Natural killer cell (primary cell): ENCODE measurements at regions of chr3 and their contacts with region 1.

Region 1: GRCh38 chr3:14651440-14652251 is at the start of gene CCDC174:
- DNase-seq: peak; percentile 95 to 100
- ATAC-seq: peak; percentile 96 to 100 (median 96)
- H3K4me3 ChIP-seq: peak within 1 kb of the TSS; percentile 84
- H3K4me3 Mint-ChIP-seq: peak within 1 kb of the TSS; percentile 98
- H3K27ac ChIP-seq: peak within 1 kb of the TSS; percentile 96
- H3K27ac Mint-ChIP-seq: peak within 1 kb of the TSS; percentile 96 to 100
- H3K4me1 ChIP-seq: peaks cover 19% of the 10 kb centered on the region
- H3K4me1 Mint-ChIP-seq: peaks cover 38 to 41% of the 10 kb centered on the region in 2 donors
- H3K27me3 ChIP-seq: no peaks in the 10 kb centered on the region
- H3K27me3 Mint-ChIP-seq: no peaks in the 10 kb centered on the region
- CTCF ChIP-seq: no peak
- total RNA-seq, gene CCDC174: 29.7 to 41.2 (median 31.9) TPM

Region 2: DNA sequence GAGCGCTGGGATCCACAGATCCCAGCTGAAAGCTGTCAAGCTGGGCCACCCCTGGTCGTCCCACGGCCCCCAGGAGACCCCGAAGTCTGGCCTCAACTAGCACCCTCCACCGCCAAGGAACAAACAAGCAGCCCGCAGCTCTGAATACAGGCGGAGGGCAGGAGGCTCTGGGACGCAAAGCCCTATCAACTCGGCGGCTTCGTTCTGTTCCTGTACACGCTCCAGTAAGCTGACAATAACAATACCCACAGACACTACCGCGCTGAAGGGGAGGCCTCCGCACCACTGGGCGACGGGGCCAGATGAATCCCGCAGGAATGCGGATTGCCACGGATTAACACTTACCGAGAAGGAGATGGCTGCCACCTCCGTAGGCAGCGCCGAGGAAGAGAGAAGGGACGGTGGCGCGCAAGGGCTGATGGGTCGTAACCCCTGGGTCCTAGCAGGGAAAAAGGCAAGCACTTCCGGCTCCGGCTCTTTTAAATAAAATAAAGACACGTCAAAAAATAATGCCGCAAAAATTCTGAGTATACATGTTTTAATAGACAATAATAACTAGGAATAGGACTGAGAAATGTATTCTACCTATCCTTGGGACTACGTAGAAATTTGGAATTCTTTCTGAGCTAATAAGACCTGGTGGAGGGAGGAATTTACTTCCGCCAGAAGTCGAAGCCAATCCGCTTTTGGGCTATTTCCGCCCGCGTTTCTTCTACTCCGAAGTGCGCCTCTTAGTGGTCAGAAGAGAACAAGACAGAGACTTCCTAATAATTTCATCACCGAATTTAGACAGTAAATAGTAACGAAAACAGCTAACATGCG is 1810.3 kb before region 1 on chr3 and contains the start of gene RPL32:
- intact Hi-C with region 1: loop called (anchors 10 kb)
- DNase-seq: peak; percentile 80 to 97
- ATAC-seq: peak; percentile 93 to 96 (median 93)
- H3K4me3 ChIP-seq: peak within 1 kb of the TSS; percentile 89
- H3K4me3 Mint-ChIP-seq: peak within 1 kb of the TSS; percentile 94
- H3K27ac ChIP-seq: peak within 1 kb of the TSS; percentile 94
- H3K27ac Mint-ChIP-seq: peak within 1 kb of the TSS; percentile 97 to 99
- H3K4me1 ChIP-seq: peaks cover 27% of the 10 kb centered on the region
- H3K4me1 Mint-ChIP-seq: peaks cover 49 to 53% of the 10 kb centered on the region in 2 donors
- H3K27me3 ChIP-seq: no peaks in the 10 kb centered on the region
- H3K27me3 Mint-ChIP-seq: no peaks in the 10 kb centered on the region
- CTCF ChIP-seq: peak; percentile 79
- total RNA-seq, gene RPL32: 1,034 to 1,328 (median 1,277) TPM

Region 3: GRCh38 chr3:13972679-13973379 is 678.8 kb before region 1 on chr3:
- intact Hi-C with region 1: no loop called
- DNase-seq: no peak
- ATAC-seq: no peak
- H3K4me3 ChIP-seq: no peak overlapping the region
- H3K4me3 Mint-ChIP-seq: no peak overlapping the region
- H3K27ac ChIP-seq: no peak overlapping the region
- H3K27ac Mint-ChIP-seq: no peak overlapping the region
- H3K4me1 ChIP-seq: no peaks in the 10 kb centered on the region
- H3K4me1 Mint-ChIP-seq: no peaks in the 10 kb centered on the region
- H3K27me3 ChIP-seq: no peaks in the 10 kb centered on the region
- H3K27me3 Mint-ChIP-seq: peaks cover 5 to 9% of the 10 kb centered on the region in 2 donors
- CTCF ChIP-seq: no peak

Region 4: DNA sequence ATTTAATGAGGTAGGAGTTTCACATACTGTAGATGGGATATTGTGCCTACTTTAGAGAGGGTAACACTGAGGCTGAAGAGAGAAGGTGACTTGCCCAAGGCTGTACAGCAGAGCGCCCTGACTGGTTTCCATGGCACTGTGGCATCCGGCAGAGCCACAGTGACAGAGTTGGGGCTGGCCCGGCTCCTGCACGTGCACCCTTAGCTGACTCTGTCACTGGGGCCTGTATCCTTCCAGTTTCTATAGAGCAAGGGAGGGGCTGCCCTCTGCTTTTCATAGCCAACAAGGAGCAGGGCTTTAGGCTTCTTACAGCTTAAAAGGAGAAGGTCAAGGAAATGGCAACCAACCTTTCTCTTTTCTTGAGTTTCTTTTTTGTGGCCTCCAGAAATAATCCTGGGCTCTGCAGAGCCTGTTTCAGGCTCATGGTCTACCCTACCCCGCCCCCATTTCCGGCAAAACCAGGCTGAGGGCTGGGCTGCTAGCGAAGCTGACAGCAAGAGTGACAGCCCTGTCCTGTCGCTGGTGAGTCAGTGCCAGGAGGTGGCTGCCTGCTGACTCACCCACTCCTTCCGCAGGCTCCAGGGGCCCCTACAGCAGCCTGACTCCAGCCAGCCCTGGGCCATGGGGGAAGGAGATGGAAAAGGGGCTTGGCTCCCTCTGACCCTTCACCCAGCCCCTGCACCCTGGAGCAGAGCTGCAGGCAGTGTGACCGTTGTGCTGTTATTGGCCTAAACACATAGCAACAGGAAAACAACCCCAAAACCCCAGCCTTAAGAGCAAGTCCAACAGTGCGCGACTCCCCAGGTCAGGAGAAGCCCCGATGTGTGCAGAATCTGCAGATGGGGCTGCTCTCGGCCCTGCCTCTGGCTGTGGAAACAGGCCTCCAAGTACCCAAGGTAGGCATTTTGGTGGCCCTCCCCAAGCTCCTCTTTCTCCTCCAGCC is 219.5 kb before region 1 on chr3:
- intact Hi-C with region 1: loop called (anchors 1 kb)
- DNase-seq: peak; percentile 91 to 96
- ATAC-seq: peak; percentile 75 to 93 (median 85)
- H3K4me3 ChIP-seq: peak overlapping the region; percentile 15
- H3K4me3 Mint-ChIP-seq: peak overlapping the region; percentile 73
- H3K27ac ChIP-seq: peak overlapping the region; percentile 97
- H3K27ac Mint-ChIP-seq: peak overlapping the region; percentile 96 to 97
- H3K4me1 ChIP-seq: peaks cover 96% of the 10 kb centered on the region
- H3K4me1 Mint-ChIP-seq: peaks cover 76 to 85% of the 10 kb centered on the region in 2 donors
- H3K27me3 ChIP-seq: no peaks in the 10 kb centered on the region
- H3K27me3 Mint-ChIP-seq: no peaks in the 10 kb centered on the region
- CTCF ChIP-seq: no peak

Region 5: GRCh38 chr3:14480207-14481025 is 171.2 kb before region 1 on chr3:
- intact Hi-C with region 1: no loop called
- DNase-seq: no peak
- ATAC-seq: no peak
- H3K4me3 ChIP-seq: no peak overlapping the region
- H3K4me3 Mint-ChIP-seq: no peak overlapping the region
- H3K27ac ChIP-seq: no peak overlapping the region
- H3K27ac Mint-ChIP-seq: no peak overlapping the region
- H3K4me1 ChIP-seq: no peaks in the 10 kb centered on the region
- H3K4me1 Mint-ChIP-seq: no peaks in the 10 kb centered on the region
- H3K27me3 ChIP-seq: no peaks in the 10 kb centered on the region
- H3K27me3 Mint-ChIP-seq: no peaks in the 10 kb centered on the region
- CTCF ChIP-seq: no peak

Region 6: DNA sequence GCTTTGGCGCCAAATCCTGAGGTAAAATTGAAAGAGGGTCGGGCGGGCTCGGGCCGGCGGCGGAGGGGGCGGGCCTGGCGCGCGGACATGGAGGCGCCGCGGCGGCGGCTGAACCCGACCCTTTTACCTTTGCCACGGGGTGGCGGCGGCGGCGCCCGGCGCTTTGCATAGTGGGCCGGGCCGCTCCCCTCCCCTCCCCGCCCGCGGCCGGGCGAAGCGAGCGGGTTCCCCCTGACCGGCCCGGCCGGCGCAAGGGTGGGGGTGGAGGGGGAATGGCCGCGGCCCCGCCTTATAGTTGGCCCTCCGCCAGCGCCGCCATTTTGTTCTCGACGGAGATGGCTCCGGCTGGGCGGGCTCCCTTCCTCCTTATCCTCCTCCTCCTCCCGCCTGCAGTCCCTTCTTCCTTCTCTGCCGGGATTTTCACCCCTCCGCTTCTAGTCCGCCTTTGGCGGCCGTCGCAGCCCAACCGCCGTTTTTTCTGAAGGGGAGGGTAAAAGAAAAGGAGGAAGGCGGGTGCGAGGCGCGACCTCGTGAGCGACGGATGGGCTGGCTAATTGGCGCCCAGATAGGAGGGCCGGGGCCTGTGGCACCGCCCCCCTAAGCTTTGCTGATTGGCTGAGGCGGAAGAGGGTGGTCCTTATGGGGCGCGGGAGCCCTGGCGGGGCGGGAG is 296.4 kb after region 1 on chr3:
- intact Hi-C with region 1: loop called (anchors 1 kb)
- DNase-seq: peak; percentile 98
- ATAC-seq: peak; percentile 85 to 95 (median 86)
- H3K4me3 ChIP-seq: peak overlapping the region; percentile 100
- H3K4me3 Mint-ChIP-seq: peak overlapping the region; percentile 98
- H3K27ac ChIP-seq: peak overlapping the region; percentile 100
- H3K27ac Mint-ChIP-seq: peak overlapping the region; percentile 98 to 100
- H3K4me1 ChIP-seq: peaks cover 13% of the 10 kb centered on the region
- H3K4me1 Mint-ChIP-seq: peaks cover 35 to 49% of the 10 kb centered on the region in 2 donors
- H3K27me3 ChIP-seq: no peaks in the 10 kb centered on the region
- H3K27me3 Mint-ChIP-seq: no peaks in the 10 kb centered on the region
- CTCF ChIP-seq: no peak

Region 7: GRCh38 chr3:15081960-15082664 is 430.5 kb after region 1 on chr3:
- intact Hi-C with region 1: no loop called
- DNase-seq: no peak
- ATAC-seq: no peak
- H3K4me3 ChIP-seq: no peak overlapping the region
- H3K4me3 Mint-ChIP-seq: no peak overlapping the region
- H3K27ac ChIP-seq: no peak overlapping the region
- H3K27ac Mint-ChIP-seq: peak overlapping the region in 1 of 2 donors; percentile 21
- H3K4me1 ChIP-seq: no peaks in the 10 kb centered on the region
- H3K4me1 Mint-ChIP-seq: no peaks in the 10 kb centered on the region
- H3K27me3 ChIP-seq: no peaks in the 10 kb centered on the region
- H3K27me3 Mint-ChIP-seq: no peaks in the 10 kb centered on the region
- CTCF ChIP-seq: no peak